ENCODE measurements at regions of chr2 and their contacts with region 1.

Region 1: DNA sequence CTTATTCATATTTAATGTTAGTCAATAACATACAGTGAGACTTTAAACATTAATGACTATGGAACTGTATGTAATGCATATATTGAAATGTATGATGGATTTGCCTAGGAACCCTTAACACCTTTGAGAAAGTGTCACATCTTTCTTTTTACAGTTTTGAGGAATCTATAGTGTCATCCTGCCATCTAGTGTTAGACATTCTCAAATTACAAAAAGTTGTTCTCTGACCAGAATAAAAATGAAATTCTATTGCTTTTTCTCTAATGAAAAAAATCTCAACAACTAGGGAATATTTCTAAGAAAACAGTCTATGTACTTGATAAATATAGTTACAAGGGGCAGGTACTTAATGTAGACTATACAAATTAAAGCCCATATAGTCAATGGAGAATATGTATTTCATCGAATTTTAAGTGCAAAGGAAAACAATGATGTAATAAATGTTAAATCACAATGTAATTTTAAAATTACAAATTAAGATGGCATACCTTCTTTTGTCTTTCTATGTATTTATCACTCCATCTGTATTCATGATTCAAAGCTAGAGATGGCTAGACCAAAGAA is 5.1 kb upstream of the CALCRL start:
- DNase-seq: no peak
- ATAC-seq: no peak
- H3K4me3 ChIP-seq: no peak overlapping the region
- H3K27ac ChIP-seq: no peak overlapping the region
- H3K4me1 ChIP-seq: no peaks in the 10 kb centered on the region
- H3K27me3 ChIP-seq: no peaks in the 10 kb centered on the region
- CTCF ChIP-seq: peak; percentile 58

Region 2: DNA sequence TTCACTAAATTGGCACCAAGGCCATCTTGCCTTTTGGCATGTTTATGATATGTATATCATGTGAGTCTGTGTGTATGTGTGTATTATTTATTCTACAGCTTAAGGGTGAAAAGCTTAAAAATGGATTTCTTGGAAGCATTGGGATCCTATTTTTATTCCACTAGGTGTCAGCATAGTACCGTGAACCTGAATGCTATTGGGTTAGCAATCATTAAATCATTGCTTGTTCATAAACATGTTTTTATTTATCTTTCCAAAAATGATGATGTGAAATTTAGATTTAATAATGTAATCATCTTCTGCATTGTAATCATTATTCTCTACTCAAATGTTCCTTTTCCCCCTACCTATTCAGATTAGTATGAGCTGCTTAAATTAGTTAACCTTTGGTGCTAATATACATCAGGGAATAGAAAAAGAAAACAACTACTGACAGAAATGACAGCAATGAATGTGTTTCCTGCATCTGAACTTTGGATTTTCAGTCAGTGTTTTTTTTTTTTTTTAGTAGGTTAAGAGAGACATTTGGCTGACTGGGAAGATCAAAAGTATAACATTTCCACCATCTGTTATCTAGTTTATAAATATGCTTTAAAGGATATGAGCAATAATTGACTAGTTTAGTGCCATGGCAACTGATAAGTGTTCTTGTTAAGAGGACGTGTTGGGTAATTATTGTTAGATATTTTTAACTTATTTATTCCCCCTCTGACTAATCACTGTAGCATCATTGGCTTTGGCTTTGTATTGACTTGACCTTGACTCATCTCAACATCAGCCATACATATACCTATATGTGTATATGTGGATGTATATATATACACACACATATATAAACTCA is 590.1 kb before region 1 on chr2:
- intact Hi-C with region 1: loop called (anchors 2 to 5 kb)
- DNase-seq: no peak
- ATAC-seq: peak in 1 of 4 donors; percentile 61
- H3K4me3 ChIP-seq: no peak overlapping the region
- H3K27ac ChIP-seq: no peak overlapping the region
- H3K4me1 ChIP-seq: no peaks in the 10 kb centered on the region
- H3K27me3 ChIP-seq: no peaks in the 10 kb centered on the region
- CTCF ChIP-seq: peak; percentile 63